ENCODE measurements at regions of chr14 and their contacts with region 1.

Region 1: DNA sequence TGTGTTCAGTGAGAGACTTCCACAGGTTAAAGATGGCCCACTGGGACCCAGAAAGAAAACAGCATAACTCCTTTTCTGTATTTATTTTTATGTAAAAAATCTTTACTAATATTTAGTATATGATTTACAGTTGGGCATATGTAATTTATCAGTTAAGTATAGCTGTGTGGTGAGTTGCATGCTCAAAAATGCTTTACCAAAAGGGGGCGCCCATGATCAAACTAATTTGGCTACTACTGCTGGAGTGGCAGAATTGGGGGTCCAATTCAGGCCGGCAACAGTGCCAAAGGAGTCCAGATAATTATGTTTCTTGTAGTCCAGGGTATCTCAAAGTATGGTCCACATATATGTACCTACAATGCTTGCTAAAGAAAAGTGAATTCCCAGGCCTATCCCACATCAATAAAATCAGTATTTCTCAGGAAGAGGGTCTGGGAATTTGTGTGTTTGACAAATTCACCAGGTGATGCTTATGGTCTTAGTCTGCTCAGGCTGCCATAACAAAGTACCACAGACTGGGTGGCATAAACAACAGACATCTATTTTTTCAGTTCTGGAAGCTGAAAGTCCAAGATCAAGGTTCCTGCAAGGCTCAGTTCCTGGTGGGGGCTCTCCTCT is 152.0 kb downstream of the KTN1 start:
- DNase-seq: peak; percentile 8 to 58 (median 33)
- ATAC-seq: peak; percentile 44
- H3K4me3 ChIP-seq: no peak overlapping the region
- H3K4me3 Mint-ChIP-seq: no peak overlapping the region
- H3K27ac ChIP-seq: no peak overlapping the region
- H3K27ac Mint-ChIP-seq: no peak overlapping the region
- H3K4me1 ChIP-seq: no peaks in the 10 kb centered on the region
- H3K4me1 Mint-ChIP-seq: peaks cover 0 to 19% (median 0%) of the 10 kb centered on the region in 7 donors
- H3K27me3 ChIP-seq: no peaks in the 10 kb centered on the region
- H3K27me3 Mint-ChIP-seq: peaks cover 0 to 16% (median 4%) of the 10 kb centered on the region in 5 donors

Region 2: DNA sequence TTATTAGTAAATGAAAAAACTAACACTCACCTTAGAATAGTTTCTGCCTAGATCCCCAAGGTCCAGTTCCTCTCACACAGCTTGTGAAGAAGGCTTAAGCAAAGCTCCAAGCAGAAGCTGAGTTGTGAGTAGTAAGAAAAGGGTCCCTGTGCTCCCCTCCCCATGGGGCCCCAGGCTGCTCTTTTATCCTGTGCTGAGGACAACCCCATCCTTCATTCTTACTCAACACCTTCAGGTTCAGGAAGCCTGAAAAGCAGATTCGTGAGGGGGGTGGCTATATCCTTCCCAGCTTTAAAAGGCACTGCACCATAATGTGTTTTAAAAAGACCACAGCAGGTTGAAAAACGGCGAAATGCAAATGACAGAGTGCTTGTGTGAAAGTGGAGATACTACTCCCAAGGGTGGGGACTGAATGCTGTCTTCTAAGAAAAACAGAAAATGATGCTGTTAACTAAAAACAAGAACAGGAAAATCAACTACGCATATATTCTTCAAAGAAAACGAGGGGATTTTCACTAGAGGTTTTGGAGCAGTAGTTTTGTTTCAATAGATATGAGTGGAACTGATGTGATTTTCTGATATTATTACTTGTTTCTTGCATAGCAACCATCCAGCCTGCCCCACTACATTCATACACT is 30.7 kb after region 1 on chr14:
- CTCF ChIA-PET with region 1: no interaction called
- POLR2A ChIA-PET with region 1: no interaction called
- intact Hi-C with region 1: loop called in 1 of 2 experiments (anchors 2 kb)
- DNase-seq: peak in 3 of 9 donors; percentile 11 to 57 (median 22)
- ATAC-seq: peak; percentile 81
- H3K4me3 ChIP-seq: no peak overlapping the region
- H3K4me3 Mint-ChIP-seq: peak overlapping the region in 3 of 10 donors; percentile 6 to 85 (median 50)
- H3K27ac ChIP-seq: no peak overlapping the region
- H3K27ac Mint-ChIP-seq: peak overlapping the region in 6 of 9 donors; percentile 13 to 91 (median 62)
- H3K4me1 ChIP-seq: no peaks in the 10 kb centered on the region
- H3K4me1 Mint-ChIP-seq: peaks cover 0 to 26% (median 2%) of the 10 kb centered on the region in 7 donors
- H3K27me3 ChIP-seq: no peaks in the 10 kb centered on the region
- H3K27me3 Mint-ChIP-seq: peaks cover under 1 to 7% (median 3%) of the 10 kb centered on the region in 5 donors

Region 3: GRCh38 chr14:55946231-55946630 is 214.2 kb after region 1 on chr14:
- CTCF ChIA-PET with region 1: no interaction called
- POLR2A ChIA-PET with region 1: no interaction called
- intact Hi-C with region 1: no loop called
- DNase-seq: no peak
- ATAC-seq: no peak
- H3K4me3 ChIP-seq: no peak overlapping the region
- H3K4me3 Mint-ChIP-seq: no peak overlapping the region
- H3K27ac ChIP-seq: no peak overlapping the region
- H3K27ac Mint-ChIP-seq: no peak overlapping the region
- H3K4me1 ChIP-seq: no peaks in the 10 kb centered on the region
- H3K4me1 Mint-ChIP-seq: no peaks in the 10 kb centered on the region
- H3K27me3 ChIP-seq: no peaks in the 10 kb centered on the region
- H3K27me3 Mint-ChIP-seq: peaks cover 11 to 31% (median 23%) of the 10 kb centered on the region in 5 donors